Left ventricle myocardium superior (tissue), 1 donor: ENCODE measurements at regions of chr1 and their contacts with region 1.

Region 1: DNA sequence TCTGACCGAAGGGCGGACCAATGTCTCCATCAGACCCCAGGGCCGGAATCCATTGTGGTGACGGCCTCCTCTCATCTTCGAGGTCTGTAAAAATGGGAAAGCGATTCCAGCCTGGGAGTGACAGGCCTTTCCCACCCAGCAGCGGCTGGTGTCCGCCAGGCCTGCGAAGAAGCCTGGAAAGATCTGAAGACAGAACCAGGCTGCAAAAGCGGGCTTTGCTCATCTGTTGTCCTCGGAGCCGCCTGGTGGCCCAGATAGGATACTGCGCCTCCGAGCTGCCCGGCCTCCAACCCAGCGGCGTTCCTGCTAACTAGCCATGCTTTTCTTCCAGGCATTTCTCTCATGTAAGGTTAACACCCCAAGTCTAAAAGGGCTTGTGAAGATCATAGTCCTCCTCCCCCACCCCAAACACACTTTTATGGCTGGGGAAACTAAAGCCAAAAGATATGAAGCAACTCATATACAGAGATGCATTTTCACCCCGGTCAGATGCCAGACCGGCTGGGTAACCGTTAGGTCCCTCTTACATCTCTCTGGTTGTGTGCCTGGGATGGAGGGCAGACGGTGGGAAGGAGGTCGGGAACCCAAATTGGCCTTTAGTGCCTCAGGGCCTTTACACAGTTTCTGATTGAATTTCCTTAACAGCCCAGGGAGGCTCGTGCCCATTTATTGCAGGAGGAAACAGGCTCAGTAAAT is 1.9 kb upstream of the DHRS3 start:
- DNase-seq: peak; percentile 90
- ATAC-seq: peak; percentile 55

Region 2: DNA sequence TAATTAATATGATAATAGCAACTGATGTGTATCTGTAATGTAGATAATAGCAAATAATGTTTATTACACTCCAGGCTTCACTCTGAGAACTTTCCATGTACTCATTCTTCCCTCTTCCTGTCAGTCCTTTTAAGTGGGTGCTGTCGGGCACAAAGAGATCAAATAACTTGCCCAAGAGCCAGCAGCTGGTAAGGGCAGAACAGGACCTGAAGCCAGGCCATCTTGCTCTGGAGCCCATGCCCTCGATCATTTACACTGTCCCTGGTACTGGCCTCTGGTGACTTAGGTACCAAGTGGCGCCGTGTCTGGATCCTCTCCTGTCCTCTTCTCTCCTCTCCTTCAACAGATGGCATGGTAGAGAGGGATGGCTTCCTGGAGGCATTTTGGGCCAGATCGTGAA is 293.0 kb before region 1 on chr1:
- intact Hi-C with region 1: loop called (anchors 10 kb)
- DNase-seq: peak; percentile 29
- ATAC-seq: peak; percentile 87

Region 3: DNA sequence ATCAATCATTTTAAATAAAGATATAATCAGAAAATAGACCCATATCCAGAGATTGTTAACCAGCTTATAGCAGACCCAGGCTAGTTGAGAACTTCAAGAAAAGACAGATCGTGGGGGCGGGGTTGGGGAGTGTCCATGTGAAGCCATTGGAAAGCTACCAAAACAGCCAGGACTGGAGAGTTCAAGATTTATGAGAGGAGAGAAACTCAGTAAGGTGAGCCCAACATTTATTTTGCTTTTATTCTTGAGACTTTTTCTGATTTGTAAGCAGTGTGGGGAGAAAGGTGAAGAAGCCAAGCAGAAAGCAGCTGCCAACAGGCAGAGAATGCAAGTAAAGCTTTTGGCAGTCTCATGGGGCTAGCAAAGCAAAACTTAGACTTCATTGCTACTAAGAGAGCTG is 210.3 kb before region 1 on chr1:
- intact Hi-C with region 1: loop called (anchors 10 kb)
- DNase-seq: peak; percentile 27
- ATAC-seq: no peak